Activated naive CD8-positive, alpha-beta T cell treated with anti-CD3 and anti-CD28 coated beads, Interleukin-2, amount 10 ng/mL, durations not matched to agents 7 days and 5 days (primary cell): ENCODE measurements at regions of chr1 and their contacts with region 1.

Region 1: GRCh38 chr1:12619792-12620487 is 1.9 kb upstream of the DHRS3 start:
- DNase-seq: peak; percentile 87
- ATAC-seq: peak; percentile 20
- H3K4me3 Mint-ChIP-seq: peak overlapping the region; percentile 100
- H3K27ac Mint-ChIP-seq: peak overlapping the region; percentile 100
- H3K4me1 Mint-ChIP-seq: peaks cover 19% of the 10 kb centered on the region
- H3K27me3 Mint-ChIP-seq: no peaks in the 10 kb centered on the region

Region 2: GRCh38 chr1:12434174-12434573 is 185.8 kb before region 1 on chr1:
- POLR2A ChIA-PET with region 1: interaction called, 122 read pairs
- DNase-seq: peak; percentile 65
- ATAC-seq: peak; percentile 40
- H3K4me3 Mint-ChIP-seq: peak overlapping the region; percentile 46
- H3K27ac Mint-ChIP-seq: peak overlapping the region; percentile 96
- H3K4me1 Mint-ChIP-seq: peaks cover 74% of the 10 kb centered on the region
- H3K27me3 Mint-ChIP-seq: no peaks in the 10 kb centered on the region

Region 3: GRCh38 chr1:12454406-12455391 is 165.2 kb before region 1 on chr1:
- POLR2A ChIA-PET with region 1: interaction called, 16 read pairs
- DNase-seq: no peak
- ATAC-seq: no peak
- H3K4me3 Mint-ChIP-seq: peak overlapping the region; percentile 40
- H3K27ac Mint-ChIP-seq: peak overlapping the region; percentile 98
- H3K4me1 Mint-ChIP-seq: peaks cover 82% of the 10 kb centered on the region
- H3K27me3 Mint-ChIP-seq: no peaks in the 10 kb centered on the region

Region 4: GRCh38 chr1:12477936-12478611 is 141.9 kb before region 1 on chr1:
- POLR2A ChIA-PET with region 1: interaction called, 65 read pairs
- DNase-seq: peak; percentile 55
- ATAC-seq: peak; percentile 37
- H3K4me3 Mint-ChIP-seq: peak overlapping the region; percentile 79
- H3K27ac Mint-ChIP-seq: peak overlapping the region; percentile 91
- H3K4me1 Mint-ChIP-seq: peaks cover 86% of the 10 kb centered on the region
- H3K27me3 Mint-ChIP-seq: no peaks in the 10 kb centered on the region

Region 5: GRCh38 chr1:12577020-12577419 is 42.9 kb before region 1 on chr1:
- POLR2A ChIA-PET with region 1: interaction called, 10 read pairs
- DNase-seq: no peak
- ATAC-seq: no peak
- H3K4me3 Mint-ChIP-seq: no peak overlapping the region
- H3K27ac Mint-ChIP-seq: no peak overlapping the region
- H3K4me1 Mint-ChIP-seq: peaks cover 4% of the 10 kb centered on the region
- H3K27me3 Mint-ChIP-seq: no peaks in the 10 kb centered on the region

Region 6: GRCh38 chr1:12677565-12677964 is 57.6 kb after region 1 on chr1:
- POLR2A ChIA-PET with region 1: no interaction called
- DNase-seq: no peak
- ATAC-seq: no peak
- H3K4me3 Mint-ChIP-seq: no peak overlapping the region
- H3K27ac Mint-ChIP-seq: no peak overlapping the region
- H3K4me1 Mint-ChIP-seq: no peaks in the 10 kb centered on the region
- H3K27me3 Mint-ChIP-seq: peaks cover 18% of the 10 kb centered on the region

Region 7: DNA sequence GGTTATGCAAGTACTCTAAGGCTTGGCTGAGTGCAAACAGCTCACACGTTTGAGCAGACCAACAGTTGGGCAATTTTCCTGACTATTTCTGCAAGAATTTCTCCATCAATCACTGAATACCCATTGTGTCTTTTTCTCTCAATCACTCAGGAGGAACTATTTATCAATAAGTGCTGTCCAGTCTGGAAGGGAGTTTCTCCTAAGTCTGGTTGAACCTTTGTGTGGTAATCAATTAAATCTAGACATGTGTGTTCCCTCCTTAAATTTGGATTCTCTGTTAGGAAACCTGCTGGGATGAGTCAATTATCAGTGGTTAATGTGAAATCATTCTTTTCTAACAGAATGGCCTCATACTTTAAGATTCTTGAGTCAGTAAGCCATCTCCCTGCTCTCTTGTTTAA is 89.2 kb after region 1 on chr1:
- POLR2A ChIA-PET with region 1: no interaction called
- DNase-seq: no peak
- ATAC-seq: no peak
- H3K4me3 Mint-ChIP-seq: no peak overlapping the region
- H3K27ac Mint-ChIP-seq: no peak overlapping the region
- H3K4me1 Mint-ChIP-seq: no peaks in the 10 kb centered on the region
- H3K27me3 Mint-ChIP-seq: peaks cover 24% of the 10 kb centered on the region

Region 8: GRCh38 chr1:12809933-12810332 is 190.0 kb after region 1 on chr1:
- POLR2A ChIA-PET with region 1: no interaction called
- DNase-seq: no peak
- ATAC-seq: no peak
- H3K4me3 Mint-ChIP-seq: no peak overlapping the region
- H3K27ac Mint-ChIP-seq: no peak overlapping the region
- H3K4me1 Mint-ChIP-seq: no peaks in the 10 kb centered on the region
- H3K27me3 Mint-ChIP-seq: peaks cover 25% of the 10 kb centered on the region